ENCODE measurements at regions of chr3 and their contacts with region 1.

Region 1: GRCh38 chr3:197454014-197454413 is 101.8 kb downstream of the BDH1 start:
- DNase-seq: no peak

Region 2: DNA sequence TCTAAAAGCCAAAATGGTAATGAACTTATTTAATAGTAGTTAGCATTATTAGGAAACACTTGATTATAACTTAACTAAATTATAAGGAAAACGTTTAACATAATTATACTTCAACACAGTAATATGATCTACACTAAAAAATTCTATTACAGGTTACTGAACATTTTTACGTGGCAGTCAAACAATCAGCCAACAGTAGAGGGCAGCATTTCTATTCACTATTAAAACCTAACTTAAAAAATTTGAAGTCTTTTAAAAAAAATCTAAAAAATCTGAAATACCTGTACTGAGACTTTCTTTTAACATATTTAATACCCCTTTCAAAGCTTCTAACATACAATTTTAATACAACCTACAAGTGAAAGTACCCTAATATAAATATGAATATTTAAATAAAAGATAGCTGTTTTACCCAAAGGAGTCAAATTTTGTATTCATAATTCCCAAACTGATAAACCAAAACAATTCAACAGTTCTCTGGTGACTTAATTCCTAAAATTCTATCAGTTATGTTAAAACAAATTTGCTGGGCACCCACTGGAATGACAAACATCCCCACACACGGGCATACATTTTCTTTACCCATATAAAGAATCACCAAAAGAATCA is 197.1 kb before region 1 on chr3:
- intact Hi-C with region 1: loop called (anchors 1 kb)
- DNase-seq: no peak

Measured in cardiac septum (tissue), 1 donor.